ENCODE measurements at regions of chr9 and their contacts with region 1.

Region 1: GRCh38 chr9:126781186-126782052 is 23.4 kb upstream of the ZBTB43 start:
- DNase-seq: peak; percentile 90
- ATAC-seq: peak; percentile 94
- H3K4me3 Mint-ChIP-seq: no peak overlapping the region
- H3K27ac Mint-ChIP-seq: no peak overlapping the region
- H3K4me1 Mint-ChIP-seq: no peaks in the 10 kb centered on the region
- H3K27me3 Mint-ChIP-seq: peaks cover 9% of the 10 kb centered on the region

Region 2: GRCh38 chr9:126170286-126170823 is 611.1 kb before region 1 on chr9:
- CTCF ChIA-PET with region 1: no interaction called
- POLR2A ChIA-PET with region 1: no interaction called
- intact Hi-C with region 1: no loop called
- DNase-seq: no peak
- ATAC-seq: no peak
- H3K4me3 Mint-ChIP-seq: no peak overlapping the region
- H3K27ac Mint-ChIP-seq: no peak overlapping the region
- H3K4me1 Mint-ChIP-seq: peaks cover 3% of the 10 kb centered on the region
- H3K27me3 Mint-ChIP-seq: peaks cover 25% of the 10 kb centered on the region

Region 3: DNA sequence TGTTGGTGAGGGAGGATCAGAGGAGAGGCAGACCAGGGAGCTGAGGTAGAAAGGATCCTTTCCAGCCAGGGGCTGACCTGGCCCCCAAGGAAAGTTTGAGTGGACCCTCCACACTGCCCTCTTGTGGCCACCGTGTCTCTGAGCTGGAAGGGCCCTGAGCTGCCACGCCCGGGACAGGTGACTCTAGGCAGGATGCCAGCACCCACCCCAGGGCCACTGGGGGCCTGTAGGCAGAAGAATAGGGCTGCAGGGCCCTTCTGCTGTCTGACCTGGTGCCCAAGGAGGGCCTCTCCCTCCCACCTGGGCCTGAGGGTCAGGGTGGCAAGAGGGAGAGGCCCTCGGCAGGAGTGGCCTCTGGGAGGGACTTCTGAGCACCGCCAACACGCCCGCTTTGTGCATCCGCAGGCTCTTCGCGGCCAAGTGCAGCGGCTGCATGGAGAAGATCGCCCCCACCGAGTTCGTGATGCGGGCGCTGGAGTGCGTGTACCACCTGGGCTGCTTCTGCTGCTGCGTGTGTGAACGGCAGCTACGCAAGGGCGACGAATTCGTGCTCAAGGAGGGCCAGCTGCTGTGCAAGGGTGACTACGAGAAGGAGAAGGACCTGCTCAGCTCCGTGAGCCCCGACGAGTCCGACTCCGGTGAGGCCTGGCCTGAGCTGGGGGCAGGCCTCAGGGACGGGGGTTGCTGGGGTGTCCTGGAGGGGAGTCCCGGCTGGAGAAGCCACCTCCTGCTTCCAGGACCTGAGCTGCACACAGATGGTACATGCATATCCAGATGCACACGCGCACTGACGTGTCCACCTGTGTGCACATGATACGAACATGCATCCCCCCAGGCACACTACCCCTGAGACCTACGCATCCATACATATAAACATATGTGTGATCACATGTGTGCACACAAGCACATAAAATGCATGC is 90.7 kb before region 1 on chr9:
- CTCF ChIA-PET with region 1: interaction called, 11 read pairs
- POLR2A ChIA-PET with region 1: no interaction called
- intact Hi-C with region 1: no loop called
- DNase-seq: peak; percentile 79
- ATAC-seq: peak; percentile 79
- H3K4me3 Mint-ChIP-seq: no peak overlapping the region
- H3K27ac Mint-ChIP-seq: no peak overlapping the region
- H3K4me1 Mint-ChIP-seq: no peaks in the 10 kb centered on the region
- H3K27me3 Mint-ChIP-seq: peaks cover 28% of the 10 kb centered on the region

Region 4: DNA sequence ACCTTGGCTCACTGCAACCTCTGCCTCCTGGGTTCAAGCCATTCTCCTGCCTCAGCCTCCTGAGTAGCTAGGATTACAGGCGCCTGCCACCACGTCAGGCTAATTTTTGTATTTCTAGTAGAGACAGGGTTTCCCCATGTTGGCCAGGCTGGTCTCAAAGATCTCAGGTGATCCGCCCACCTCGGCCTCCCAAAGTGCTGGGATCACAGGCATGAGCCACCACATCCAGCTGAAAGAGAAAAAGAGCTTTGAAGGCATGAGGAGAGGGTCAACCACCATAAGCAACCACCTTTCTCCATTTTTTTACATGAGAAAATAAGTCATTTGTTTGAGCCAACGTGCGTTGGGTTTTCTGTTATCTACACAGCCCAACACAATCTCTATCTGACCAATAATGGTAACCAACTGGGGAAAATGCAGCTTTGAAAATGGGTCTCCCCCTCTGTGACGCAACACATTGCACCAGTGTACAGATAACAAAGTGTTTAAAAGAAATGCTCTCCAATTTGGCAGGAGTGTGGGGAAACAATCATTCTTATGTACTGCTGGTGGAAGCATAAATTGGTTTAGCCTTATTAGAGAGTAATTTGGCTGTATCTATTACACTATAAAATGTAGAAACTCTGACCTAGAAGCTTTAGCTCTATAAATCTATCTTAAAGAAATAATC is 22.4 kb before region 1 on chr9:
- CTCF ChIA-PET with region 1: interaction called, 10 read pairs
- POLR2A ChIA-PET with region 1: no interaction called
- intact Hi-C with region 1: no loop called
- DNase-seq: no peak
- ATAC-seq: no peak
- H3K4me3 Mint-ChIP-seq: no peak overlapping the region
- H3K27ac Mint-ChIP-seq: no peak overlapping the region
- H3K4me1 Mint-ChIP-seq: no peaks in the 10 kb centered on the region
- H3K27me3 Mint-ChIP-seq: no peaks in the 10 kb centered on the region